CD4-positive, alpha-beta memory T cell (primary cell): ENCODE measurements at regions of chr1 and their contacts with region 1.

Region 1: DNA sequence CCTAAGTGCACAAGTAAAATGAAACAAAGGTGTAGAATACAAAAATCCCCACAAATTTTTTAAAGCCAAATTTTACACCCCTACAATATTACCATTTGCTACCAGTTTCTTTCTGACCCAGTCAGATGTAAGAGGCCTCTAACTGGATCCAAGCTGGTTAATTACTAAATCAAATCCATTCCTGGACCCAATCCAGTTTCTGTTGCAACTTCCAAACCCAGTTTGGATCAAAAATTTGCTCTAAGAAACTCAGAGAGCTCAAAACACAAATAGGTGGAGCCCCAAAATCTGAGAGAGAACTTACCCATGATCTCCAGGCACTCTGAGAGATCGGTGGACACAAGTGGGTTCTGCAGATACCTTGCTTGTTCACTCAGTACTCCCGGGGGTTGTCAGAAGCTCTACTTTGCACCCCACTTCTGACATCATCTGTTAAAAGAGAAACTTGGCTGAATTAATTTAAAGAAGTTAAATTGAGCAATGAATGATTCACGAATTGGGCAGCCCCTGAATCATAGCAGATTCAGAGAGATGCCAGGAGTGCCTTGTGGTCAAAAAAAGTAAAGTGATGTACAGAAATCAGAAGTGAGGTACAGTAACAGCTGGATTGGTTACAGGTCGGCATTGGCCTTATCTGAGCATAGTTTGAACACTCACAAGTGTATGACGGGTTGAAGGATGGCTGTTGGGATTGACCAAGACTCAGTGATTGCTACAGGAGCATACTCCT is 448.0 kb downstream of the KCNT2 start:
- DNase-seq: no peak
- H3K4me3 ChIP-seq: no peak overlapping the region
- H3K4me3 Mint-ChIP-seq: no peak overlapping the region
- H3K27ac ChIP-seq: no peak overlapping the region
- H3K27ac Mint-ChIP-seq: no peak overlapping the region
- H3K4me1 ChIP-seq: no peaks in the 10 kb centered on the region
- H3K4me1 Mint-ChIP-seq: no peaks in the 10 kb centered on the region
- H3K27me3 ChIP-seq: no peaks in the 10 kb centered on the region
- H3K27me3 Mint-ChIP-seq: no peaks in the 10 kb centered on the region

Region 2: DNA sequence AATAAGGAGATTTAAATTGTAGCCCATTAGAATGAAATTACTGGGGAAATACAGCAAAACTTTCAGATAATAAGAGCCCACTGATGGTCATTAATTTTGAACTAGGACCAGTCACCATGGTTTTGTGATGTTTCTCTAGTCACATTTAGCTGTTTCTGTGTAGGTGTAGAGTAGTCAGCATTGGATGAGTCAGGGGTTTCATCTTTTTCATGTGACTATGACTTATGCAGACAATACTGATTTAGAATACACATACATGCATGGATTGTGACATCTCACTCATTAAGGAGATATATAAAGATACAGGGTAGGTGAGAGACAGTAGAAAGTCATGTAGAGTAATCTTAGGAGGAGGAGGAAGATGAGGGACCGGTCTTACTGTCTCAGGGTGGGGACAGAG is 744.6 kb before region 1 on chr1:
- CTCF ChIA-PET with region 1: no interaction called
- POLR2A ChIA-PET with region 1: no interaction called
- intact Hi-C with region 1: no loop called
- DNase-seq: no peak
- H3K4me3 ChIP-seq: no peak overlapping the region
- H3K4me3 Mint-ChIP-seq: no peak overlapping the region
- H3K27ac ChIP-seq: no peak overlapping the region
- H3K27ac Mint-ChIP-seq: no peak overlapping the region
- H3K4me1 ChIP-seq: no peaks in the 10 kb centered on the region
- H3K4me1 Mint-ChIP-seq: no peaks in the 10 kb centered on the region
- H3K27me3 ChIP-seq: no peaks in the 10 kb centered on the region
- H3K27me3 Mint-ChIP-seq: no peaks in the 10 kb centered on the region

Region 3: DNA sequence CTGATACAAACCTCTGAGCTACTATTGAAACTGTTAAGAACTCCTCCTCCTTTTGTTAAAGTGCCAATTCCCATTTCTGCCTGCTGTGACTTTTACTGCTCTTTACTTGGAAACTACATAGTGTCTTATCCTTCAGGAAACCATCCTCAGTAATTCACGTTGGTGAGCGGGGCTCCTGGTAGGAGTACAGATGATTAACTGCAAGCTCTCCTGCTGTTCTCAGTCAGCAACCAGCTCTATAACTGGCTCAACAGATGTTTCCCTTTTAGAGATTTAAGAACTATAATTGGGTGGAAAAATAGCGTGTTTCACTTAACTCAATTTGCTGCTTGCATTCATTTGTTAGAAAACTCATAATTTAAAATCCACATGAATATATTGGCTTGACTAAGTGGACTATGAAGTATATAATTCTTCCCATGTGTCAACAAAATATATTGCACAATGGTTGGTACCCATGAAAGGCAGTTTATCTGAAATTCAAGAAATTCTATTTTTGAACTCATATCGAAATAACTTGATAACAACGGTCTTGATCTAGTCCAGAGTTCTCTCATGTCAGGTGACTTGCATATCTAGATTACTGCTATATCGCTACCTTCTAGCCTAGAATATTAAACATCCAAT is 126.0 kb before region 1 on chr1:
- CTCF ChIA-PET with region 1: no interaction called
- POLR2A ChIA-PET with region 1: no interaction called
- intact Hi-C with region 1: no loop called
- DNase-seq: no peak
- H3K4me3 ChIP-seq: no peak overlapping the region
- H3K4me3 Mint-ChIP-seq: no peak overlapping the region
- H3K27ac ChIP-seq: no peak overlapping the region
- H3K27ac Mint-ChIP-seq: no peak overlapping the region
- H3K4me1 ChIP-seq: no peaks in the 10 kb centered on the region
- H3K4me1 Mint-ChIP-seq: no peaks in the 10 kb centered on the region
- H3K27me3 ChIP-seq: no peaks in the 10 kb centered on the region
- H3K27me3 Mint-ChIP-seq: no peaks in the 10 kb centered on the region

Region 4: GRCh38 chr1:196148367-196148970 is 11.8 kb before region 1 on chr1:
- CTCF ChIA-PET with region 1: interaction called, 13 read pairs
- POLR2A ChIA-PET with region 1: no interaction called
- intact Hi-C with region 1: no loop called
- DNase-seq: peak in 4 of 5 donors; percentile 16 to 21 (median 20)
- H3K4me3 ChIP-seq: no peak overlapping the region
- H3K4me3 Mint-ChIP-seq: no peak overlapping the region
- H3K27ac ChIP-seq: no peak overlapping the region
- H3K27ac Mint-ChIP-seq: no peak overlapping the region
- H3K4me1 ChIP-seq: no peaks in the 10 kb centered on the region
- H3K4me1 Mint-ChIP-seq: no peaks in the 10 kb centered on the region
- H3K27me3 ChIP-seq: no peaks in the 10 kb centered on the region
- H3K27me3 Mint-ChIP-seq: no peaks in the 10 kb centered on the region

Region 5: GRCh38 chr1:196193896-196194559 is 33.8 kb after region 1 on chr1:
- CTCF ChIA-PET with region 1: no interaction called
- POLR2A ChIA-PET with region 1: no interaction called
- intact Hi-C with region 1: no loop called
- DNase-seq: no peak
- H3K4me3 ChIP-seq: no peak overlapping the region
- H3K4me3 Mint-ChIP-seq: no peak overlapping the region
- H3K27ac ChIP-seq: no peak overlapping the region
- H3K27ac Mint-ChIP-seq: no peak overlapping the region
- H3K4me1 ChIP-seq: no peaks in the 10 kb centered on the region
- H3K4me1 Mint-ChIP-seq: no peaks in the 10 kb centered on the region
- H3K27me3 ChIP-seq: no peaks in the 10 kb centered on the region
- H3K27me3 Mint-ChIP-seq: peaks cover 0 to 2% of the 10 kb centered on the region in 2 donors